ENCODE measurements at regions of chr5 and their contacts with region 1.

Region 1: DNA sequence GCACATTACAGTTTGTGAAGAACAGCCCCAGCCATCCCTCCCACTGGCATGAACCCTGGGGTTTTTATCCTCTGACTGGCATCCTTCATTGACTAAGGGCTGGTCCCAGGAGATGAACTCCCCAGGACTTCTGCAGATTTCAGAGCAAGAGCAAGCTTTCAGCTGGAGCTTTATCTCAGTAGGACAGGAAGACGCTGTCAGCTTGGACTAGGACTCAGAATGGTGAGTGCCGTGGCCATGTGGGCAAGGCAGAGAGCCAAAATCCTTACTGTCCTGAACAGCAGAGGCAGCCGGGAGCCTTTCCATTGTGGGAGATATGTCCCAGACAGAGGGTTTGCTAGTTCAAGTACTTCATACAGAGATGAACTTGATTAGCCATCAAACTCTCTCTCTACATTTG is 3.2 kb upstream of the ACOT12 start:
- DNase-seq: no peak
- ATAC-seq: no peak; the same call in 1 of the 2 replicates
- H3K4me3 ChIP-seq: no peak overlapping the region
- H3K27ac ChIP-seq: no peak overlapping the region
- H3K4me1 ChIP-seq: no peaks in the 10 kb centered on the region
- H3K27me3 ChIP-seq: no peaks in the 10 kb centered on the region
- CTCF ChIP-seq: no peak

Region 2: GRCh38 chr5:81006947-81007636 is 390.1 kb before region 1 on chr5:
- CTCF ChIA-PET with region 1: no interaction called
- POLR2A ChIA-PET with region 1: interaction called, 10 read pairs
- intact Hi-C with region 1: no loop called
- DNase-seq: no peak
- ATAC-seq: no peak
- H3K4me3 ChIP-seq: no peak overlapping the region
- H3K27ac ChIP-seq: no peak overlapping the region
- H3K4me1 ChIP-seq: no peaks in the 10 kb centered on the region
- H3K27me3 ChIP-seq: no peaks in the 10 kb centered on the region
- CTCF ChIP-seq: no peak

Region 3: DNA sequence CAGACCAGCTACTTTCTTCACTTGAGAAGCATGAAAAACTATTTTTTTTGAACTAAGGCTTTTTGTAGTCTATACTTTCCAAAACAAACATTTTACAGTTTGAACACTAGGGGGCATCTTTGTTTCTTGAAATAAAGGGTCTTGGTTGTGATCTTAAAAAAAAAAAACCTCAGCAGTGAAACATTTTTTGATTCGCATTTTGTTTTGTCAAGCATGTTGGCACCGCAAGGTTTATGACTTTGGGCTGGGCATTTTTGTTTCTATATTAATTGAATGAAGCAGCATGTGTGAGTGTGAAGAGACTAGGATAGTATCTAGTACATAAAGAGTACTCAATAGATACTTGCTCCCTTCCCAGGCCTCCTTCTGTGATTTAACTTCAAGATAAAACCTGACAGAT is 28.4 kb after region 1 on chr5:
- CTCF ChIA-PET with region 1: no interaction called
- POLR2A ChIA-PET with region 1: no interaction called
- intact Hi-C with region 1: no loop called
- DNase-seq: peak; percentile 52
- ATAC-seq: peak; percentile 7; the same call in 1 of the 2 replicates
- H3K4me3 ChIP-seq: no peak overlapping the region
- H3K27ac ChIP-seq: no peak overlapping the region
- H3K4me1 ChIP-seq: peaks cover 73% of the 10 kb centered on the region
- H3K27me3 ChIP-seq: no peaks in the 10 kb centered on the region
- CTCF ChIP-seq: peak; percentile 68

Region 4: DNA sequence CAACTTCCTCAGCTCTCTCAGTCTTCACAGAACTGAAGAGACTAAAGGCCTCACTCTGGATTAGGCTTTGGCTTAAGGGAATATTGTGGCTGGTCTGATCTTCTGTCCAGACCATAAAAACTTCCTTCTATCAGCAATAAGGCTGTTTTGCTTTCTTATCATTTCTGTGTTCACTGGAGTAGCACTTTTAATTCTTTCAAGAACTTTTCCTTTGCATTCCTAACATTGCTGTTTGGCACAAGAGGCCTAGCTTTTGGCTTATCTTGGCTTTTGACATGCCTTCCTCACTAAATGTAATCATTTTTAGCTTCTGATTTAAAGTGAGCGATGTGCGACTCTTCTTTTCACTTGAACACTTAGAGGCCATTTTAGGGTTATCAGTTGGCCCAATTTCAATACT is 85.4 kb after region 1 on chr5:
- CTCF ChIA-PET with region 1: no interaction called
- POLR2A ChIA-PET with region 1: no interaction called
- intact Hi-C with region 1: no loop called
- DNase-seq: no peak
- ATAC-seq: no peak
- H3K4me3 ChIP-seq: no peak overlapping the region
- H3K27ac ChIP-seq: no peak overlapping the region
- H3K4me1 ChIP-seq: no peaks in the 10 kb centered on the region
- H3K27me3 ChIP-seq: no peaks in the 10 kb centered on the region
- CTCF ChIP-seq: no peak

Measured in PC-3 (cell line).